Right ventricle myocardium inferior (tissue), 1 donor: ENCODE measurements at regions of chr3 and their contacts with region 1.

Region 1: GRCh38 chr3:40780291-40780924 is 255.6 kb downstream of the ZNF621 start:
- DNase-seq: peak; percentile 86
- ATAC-seq: peak; percentile 80

Region 2: DNA sequence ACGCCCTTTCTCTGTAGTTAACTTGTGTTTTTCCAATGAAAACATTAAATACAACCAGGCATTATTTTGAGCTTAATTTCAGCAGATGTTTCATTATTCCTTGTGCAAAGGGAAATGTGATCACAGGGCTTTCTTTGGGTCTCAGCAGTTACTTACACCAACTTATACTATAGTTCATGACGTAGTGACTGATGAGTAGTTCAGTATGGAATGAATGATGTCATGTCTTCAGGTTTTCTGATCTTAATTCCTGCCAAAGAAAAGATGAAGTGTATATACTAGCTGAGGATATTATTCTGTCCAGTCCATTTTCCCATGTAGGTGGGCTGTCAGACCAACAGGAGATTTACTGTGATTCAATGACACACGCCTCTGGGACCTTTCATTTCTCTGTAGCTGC is 909.7 kb before region 1 on chr3:
- intact Hi-C with region 1: no loop called
- DNase-seq: no peak
- ATAC-seq: no peak

Region 3: DNA sequence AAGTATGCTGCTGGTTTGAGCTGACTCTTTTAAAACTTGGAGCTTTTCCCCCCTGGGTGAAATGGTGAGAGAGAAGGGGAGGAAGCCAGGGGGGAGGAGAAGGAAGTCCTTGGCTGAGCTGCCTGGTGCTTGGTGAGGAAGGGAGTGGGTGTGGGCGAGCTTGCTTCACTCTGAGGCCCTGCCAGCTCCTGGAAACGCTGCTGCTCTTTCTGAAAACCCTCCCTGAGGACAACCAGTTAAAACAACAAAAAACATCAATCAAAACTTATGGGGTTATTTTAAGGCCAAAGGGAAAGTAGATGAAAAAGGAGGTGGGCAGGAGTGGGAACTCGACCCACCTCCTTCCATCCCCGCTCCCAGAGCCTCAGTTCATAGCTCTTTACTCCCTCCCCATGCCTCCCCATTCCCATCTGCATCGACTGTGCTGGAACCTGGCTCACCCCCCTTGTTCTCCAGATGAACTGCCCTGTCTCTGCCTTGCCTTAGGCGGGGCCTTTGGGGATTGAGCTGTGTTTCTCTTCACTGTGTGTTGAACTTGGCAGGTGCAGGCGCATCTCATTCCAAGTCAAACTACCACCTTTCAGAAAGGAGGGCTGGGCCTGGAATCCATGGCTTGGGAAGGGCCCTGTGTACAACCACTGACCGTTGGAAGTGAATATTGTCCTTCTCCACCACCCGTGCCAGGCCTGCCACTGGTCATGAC is 89.5 kb before region 1 on chr3:
- intact Hi-C with region 1: loop called (anchors 1 kb)
- DNase-seq: peak; percentile 89
- ATAC-seq: peak; percentile 93

Region 4: DNA sequence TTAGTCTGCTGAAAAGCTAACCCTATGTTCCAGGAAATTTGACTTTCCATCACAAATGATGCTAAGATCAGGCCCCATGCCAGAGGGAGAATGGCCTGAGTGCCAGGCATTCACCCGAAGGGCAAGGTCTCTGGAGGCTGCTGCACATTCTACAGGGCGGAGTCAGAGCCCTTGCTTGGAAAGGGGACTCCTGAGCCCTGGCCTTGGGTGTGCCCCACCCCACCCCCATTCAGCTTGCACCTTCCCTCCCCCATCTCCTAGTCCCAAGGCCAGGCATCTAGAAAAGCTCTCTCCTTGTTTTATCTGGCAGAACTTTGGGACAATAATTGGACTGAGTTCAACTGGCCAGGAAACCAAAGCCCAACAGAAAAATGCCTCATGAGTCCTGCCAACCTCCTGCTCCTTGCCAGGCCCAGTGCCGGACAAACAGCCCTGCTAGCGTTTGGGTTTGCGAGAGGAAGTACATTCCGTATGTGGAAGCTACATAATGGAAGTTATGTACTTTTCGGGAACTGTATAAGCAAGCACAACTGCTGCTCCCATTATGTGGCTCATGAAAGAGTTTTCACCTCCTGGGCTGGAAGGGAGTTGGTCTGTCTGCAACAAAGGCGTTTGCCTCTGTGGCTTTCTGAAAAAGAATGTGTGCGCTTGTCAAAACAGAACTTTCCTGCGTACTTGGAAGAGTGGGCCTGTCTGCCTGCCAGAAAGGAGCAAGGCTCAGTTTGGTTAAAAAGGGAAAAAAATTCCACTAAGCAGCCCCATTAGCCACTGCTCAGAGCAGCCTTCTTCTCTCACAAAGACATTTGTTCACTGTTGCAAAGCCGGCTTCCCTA is 97.4 kb after region 1 on chr3:
- intact Hi-C with region 1: loop called (anchors 1 kb)
- DNase-seq: peak; percentile 78
- ATAC-seq: peak; percentile 87

Region 5: DNA sequence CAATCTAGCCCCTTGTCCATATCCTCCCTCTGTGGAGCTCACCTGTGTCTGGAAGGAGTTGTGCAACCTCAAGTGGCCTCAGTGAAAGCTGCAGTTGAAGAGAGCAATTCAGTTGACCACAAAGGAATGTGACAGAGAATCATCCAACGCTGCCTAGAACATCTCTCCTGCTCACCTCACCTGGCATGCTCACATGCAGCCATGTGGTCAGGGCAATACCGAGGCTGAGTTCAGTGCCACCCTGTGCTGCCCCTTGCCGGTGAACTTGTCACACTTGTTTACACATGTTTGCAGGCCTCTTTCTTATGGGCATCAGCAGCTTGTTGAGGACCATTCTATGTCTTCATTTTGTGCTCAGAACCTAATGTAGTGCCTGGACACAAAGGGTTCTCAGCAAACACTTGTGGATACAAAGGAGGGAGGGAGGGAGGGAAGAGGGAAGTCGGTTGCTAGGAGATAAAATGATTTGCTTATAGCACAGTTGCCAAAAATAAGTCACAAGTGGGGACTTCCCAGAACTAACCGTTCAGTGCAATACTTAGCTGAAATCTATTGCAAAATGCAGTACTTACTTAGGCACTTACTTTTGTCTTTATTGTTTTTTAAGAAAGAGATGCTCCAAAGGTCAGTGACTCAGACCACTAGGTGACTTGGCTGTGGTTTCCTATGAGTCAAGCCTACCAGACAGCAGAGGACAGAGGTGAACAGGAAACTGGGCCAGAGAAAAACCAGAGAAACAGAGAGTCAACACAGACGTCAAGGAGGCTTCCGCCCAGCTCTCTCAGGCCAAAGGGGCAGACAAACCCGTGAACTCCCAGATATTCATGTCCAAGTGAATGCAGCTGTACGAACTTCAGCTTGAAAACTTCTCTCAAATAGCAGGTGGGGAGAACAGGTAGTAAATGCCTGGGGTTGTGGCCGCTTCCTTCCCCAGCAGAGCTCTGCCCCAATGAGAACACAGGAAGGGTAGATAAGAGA is 191.1 kb after region 1 on chr3:
- intact Hi-C with region 1: loop called (anchors 5 kb)
- DNase-seq: peak; percentile 73
- ATAC-seq: peak; percentile 92

Region 6: GRCh38 chr3:40985194-40985593 is 204.8 kb after region 1 on chr3:
- intact Hi-C with region 1: no loop called
- DNase-seq: no peak
- ATAC-seq: no peak